H1 (cell line): ENCODE measurements at regions of chr14 and their contacts with region 1.

Region 1: DNA sequence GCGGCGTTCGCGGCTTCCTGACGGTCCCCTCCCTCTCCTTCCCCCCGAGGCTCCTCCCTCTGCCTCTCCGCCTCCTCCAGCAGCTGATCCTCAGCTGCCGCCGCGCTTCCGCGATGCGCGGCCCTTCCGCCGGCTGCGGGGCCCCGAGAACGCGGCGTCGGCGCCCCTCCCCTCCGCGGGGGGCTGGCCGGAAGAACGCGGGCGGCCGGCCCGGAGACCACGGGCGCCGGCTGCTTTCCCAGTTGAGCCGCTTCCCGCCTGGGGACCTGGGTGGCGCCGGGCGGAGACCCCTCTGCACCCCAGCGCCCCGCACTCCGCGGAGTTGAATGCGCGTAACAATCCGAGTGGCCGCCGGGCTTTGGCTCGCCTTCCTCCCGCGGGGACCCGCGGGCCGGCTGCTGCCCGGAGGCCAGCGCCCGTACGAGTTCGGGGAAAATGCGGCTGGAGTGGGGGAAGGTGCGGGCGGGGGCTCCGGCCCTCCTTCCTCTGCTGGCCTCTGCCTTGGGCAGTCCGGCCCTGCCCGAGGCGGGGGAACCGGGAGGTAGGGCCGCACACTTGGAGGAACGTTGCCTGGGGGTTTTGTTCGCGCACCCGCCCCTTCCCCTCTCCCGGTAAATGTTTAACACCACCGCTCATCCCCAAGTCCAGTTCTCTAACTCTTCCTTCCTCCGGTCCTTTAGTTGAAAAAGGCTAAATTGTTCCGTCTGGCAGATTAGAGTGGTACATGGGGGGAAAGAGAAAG is 383 bp upstream of the DCAF5 start:
- DNase-seq: peak; percentile 77 to 82
- H3K4me3 ChIP-seq: peak overlapping the region; percentile 62 to 89 (median 78)
- H3K27ac ChIP-seq: no peak overlapping the region
- H3K4me1 ChIP-seq: peaks cover 0 to 6% (median 5%) of the 10 kb centered on the region in 4 experiments
- H3K27me3 ChIP-seq: peaks cover 0 to 12% (median 5%) of the 10 kb centered on the region in 4 experiments; a peak in 5 of 7 replicates
- CTCF ChIP-seq: no peak
- EP300 ChIP-seq: no peak
- POLR2A ChIP-seq: peak in 1 of 2 experiments; percentile 32; a peak in 1 of 3 replicates
- RAD21 ChIP-seq: no peak

Region 2: GRCh38 chr14:69129264-69129880 is 23.9 kb before region 1 on chr14:
- CTCF ChIA-PET with region 1: interaction called, 17 read pairs
- POLR2A ChIA-PET with region 1: interaction called, 5 read pairs
- DNase-seq: peak in 1 of 2 experiments; percentile 73
- H3K4me3 ChIP-seq: no peak overlapping the region
- H3K27ac ChIP-seq: peak overlapping the region; percentile 1; the same call in 1 of the 2 replicates
- H3K4me1 ChIP-seq: peaks cover 0 to 4% (median 2%) of the 10 kb centered on the region in 4 experiments; a peak in 3 of 7 replicates
- H3K27me3 ChIP-seq: no peaks in the 10 kb centered on the region
- CTCF ChIP-seq: peak; percentile 62 to 98 (median 85)
- EP300 ChIP-seq: no peak
- POLR2A ChIP-seq: peak in 1 of 2 experiments; percentile 23; a peak in 1 of 3 replicates
- RAD21 ChIP-seq: peak; percentile 87 to 94

Region 3: DNA sequence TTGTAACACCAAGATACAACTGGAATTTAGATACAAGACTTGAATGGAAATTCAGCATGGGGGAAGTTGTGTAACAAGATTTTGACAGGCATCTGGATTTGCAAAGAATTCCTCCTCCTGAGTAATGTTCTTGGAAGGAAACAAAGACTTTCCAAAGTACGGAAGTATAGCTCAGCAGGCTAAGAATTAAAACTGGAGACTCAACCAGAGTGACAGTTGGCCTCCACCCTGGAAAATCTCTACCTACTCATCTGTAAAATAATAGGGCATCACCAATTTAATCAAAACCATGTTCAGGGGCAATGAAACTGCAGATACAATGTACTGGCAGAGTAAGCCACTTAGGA is 15.1 kb before region 1 on chr14:
- CTCF ChIA-PET with region 1: interaction called, 31 read pairs
- POLR2A ChIA-PET with region 1: interaction called, 6 read pairs
- DNase-seq: no peak
- H3K4me3 ChIP-seq: no peak overlapping the region
- H3K27ac ChIP-seq: no peak overlapping the region
- H3K4me1 ChIP-seq: peaks cover 0 to 9% (median 3%) of the 10 kb centered on the region in 4 experiments; a peak in 3 of 7 replicates
- H3K27me3 ChIP-seq: no peaks in the 10 kb centered on the region
- CTCF ChIP-seq: no peak
- EP300 ChIP-seq: no peak
- POLR2A ChIP-seq: no peak
- RAD21 ChIP-seq: no peak